ENCODE measurements at regions of chr4 and their contacts with region 1.

Region 1: GRCh38 chr4:53015681-53016080 is 153.6 kb downstream of the RASL11B start:
- DNase-seq: peak; percentile 81
- H3K4me3 ChIP-seq: no peak overlapping the region
- H3K27ac ChIP-seq: no peak overlapping the region
- H3K4me1 ChIP-seq: peaks cover 18% of the 10 kb centered on the region
- H3K27me3 ChIP-seq: no peaks in the 10 kb centered on the region
- CTCF ChIP-seq: peak; percentile 53 to 63
- POLR2A ChIP-seq: no peak

Region 2: GRCh38 chr4:53061091-53061850 is 45.6 kb after region 1 on chr4:
- CTCF ChIA-PET with region 1: no interaction called
- POLR2A ChIA-PET with region 1: no interaction called
- dilution Hi-C with region 1: no loop called
- intact Hi-C with region 1: no loop called
- DNase-seq: no peak
- H3K4me3 ChIP-seq: no peak overlapping the region
- H3K27ac ChIP-seq: no peak overlapping the region
- H3K4me1 ChIP-seq: no peaks in the 10 kb centered on the region
- H3K27me3 ChIP-seq: no peaks in the 10 kb centered on the region
- CTCF ChIP-seq: no peak
- POLR2A ChIP-seq: no peak

Region 3: DNA sequence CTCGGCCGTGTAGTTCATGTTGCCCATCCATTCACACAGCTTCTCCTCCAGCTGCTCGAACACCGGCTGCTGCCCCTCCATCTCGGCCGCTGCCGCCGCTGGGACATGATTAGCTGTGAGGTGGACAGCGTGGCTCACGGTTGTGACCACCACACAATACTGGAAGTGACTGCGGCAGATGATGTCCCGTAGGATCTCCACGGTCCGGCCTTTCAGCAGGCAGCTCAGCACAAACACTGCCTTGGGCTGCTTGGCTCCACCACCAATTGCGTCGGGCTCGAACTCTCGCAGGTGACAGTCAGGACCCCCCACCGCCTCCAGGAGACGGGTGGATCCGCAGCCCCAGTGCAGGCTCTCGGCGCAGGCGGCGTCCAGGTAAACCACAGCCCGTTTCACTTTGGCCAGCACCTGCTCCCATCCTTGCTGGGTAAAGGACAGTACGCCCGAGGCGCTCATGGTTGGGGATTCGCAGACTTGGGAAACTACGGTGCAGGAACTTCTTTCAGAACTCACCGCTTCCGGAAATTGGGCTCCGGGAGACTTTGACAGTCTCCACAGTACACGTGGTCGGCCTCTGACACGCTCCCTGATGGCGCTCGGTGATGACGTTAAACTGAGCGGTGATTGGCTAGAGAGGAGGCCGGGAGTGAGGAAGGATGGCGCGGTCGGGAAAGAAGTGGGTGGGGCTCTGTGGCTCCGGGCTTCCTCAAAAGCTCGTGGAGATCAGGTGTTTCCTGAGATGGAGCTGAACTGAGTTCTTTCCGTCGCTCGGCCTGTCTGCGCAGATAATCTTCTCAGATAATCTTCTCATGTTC is 350.0 kb after region 1 on chr4 and contains the start of gene SCFD2:
- CTCF ChIA-PET with region 1: interaction called, 5 read pairs
- POLR2A ChIA-PET with region 1: no interaction called
- dilution Hi-C with region 1: no loop called
- intact Hi-C with region 1: loop called (anchors 10 kb)
- DNase-seq: peak; percentile 96
- H3K4me3 ChIP-seq: peak within 1 kb of the TSS; percentile 49 to 97 (median 74)
- H3K27ac ChIP-seq: peak within 1 kb of the TSS; percentile 7
- H3K4me1 ChIP-seq: peaks cover 17% of the 10 kb centered on the region
- H3K27me3 ChIP-seq: peaks cover 14 to 19% of the 10 kb centered on the region in 2 experiments
- CTCF ChIP-seq: no peak
- POLR2A ChIP-seq: peak; percentile 67
- total RNA-seq, gene SCFD2: 17.6 and 22.8 TPM in 2 replicates

Region 4: DNA sequence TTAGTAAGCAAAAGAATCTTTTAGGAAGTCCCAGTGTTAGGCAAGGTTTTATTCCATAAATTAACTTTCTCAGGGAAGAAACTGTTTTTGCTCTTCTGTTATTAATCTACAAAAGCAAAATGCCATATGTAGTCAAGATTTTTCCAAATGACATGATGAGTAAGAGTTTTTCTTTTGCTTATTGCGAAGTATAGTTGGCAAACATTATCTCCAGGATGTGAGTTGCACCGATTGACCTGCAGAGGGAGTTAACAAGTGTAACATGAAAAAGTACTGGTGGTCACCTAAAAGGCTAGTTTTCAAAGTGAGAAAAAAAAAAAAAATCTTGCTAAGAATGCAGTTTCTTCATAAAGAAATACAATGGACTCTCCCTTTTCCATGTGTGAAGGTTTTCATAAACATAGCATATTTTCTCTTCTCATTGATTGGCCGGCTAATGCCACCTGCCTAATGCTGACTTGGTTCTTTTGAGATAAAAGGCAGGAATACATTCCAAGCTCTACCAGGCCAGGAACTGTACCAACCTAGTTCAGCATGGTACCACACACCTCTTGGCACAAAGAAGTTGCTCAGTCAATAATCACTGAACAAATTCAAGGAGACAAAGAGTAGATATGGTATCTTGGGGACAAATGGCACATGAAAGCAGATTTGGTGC is 475.4 kb after region 1 on chr4:
- CTCF ChIA-PET with region 1: interaction called, 6 read pairs
- POLR2A ChIA-PET with region 1: no interaction called
- dilution Hi-C with region 1: no loop called
- intact Hi-C with region 1: loop called (anchors 10 kb)
- DNase-seq: peak; percentile 85
- H3K4me3 ChIP-seq: no peak overlapping the region
- H3K27ac ChIP-seq: no peak overlapping the region
- H3K4me1 ChIP-seq: peaks cover 6% of the 10 kb centered on the region
- H3K27me3 ChIP-seq: no peaks in the 10 kb centered on the region
- CTCF ChIP-seq: peak; percentile 52 to 55
- POLR2A ChIP-seq: no peak

Region 5: GRCh38 chr4:53804719-53805118 is 789.0 kb after region 1 on chr4:
- CTCF ChIA-PET with region 1: interaction called, 3 read pairs
- POLR2A ChIA-PET with region 1: no interaction called
- dilution Hi-C with region 1: no loop called
- intact Hi-C with region 1: loop called (anchors 1 kb)
- DNase-seq: peak; percentile 11
- H3K4me3 ChIP-seq: no peak overlapping the region
- H3K27ac ChIP-seq: no peak overlapping the region
- H3K4me1 ChIP-seq: no peaks in the 10 kb centered on the region
- H3K27me3 ChIP-seq: peaks cover 4 to 17% of the 10 kb centered on the region in 2 experiments
- CTCF ChIP-seq: peak; percentile 30 to 33
- POLR2A ChIP-seq: no peak

Measured in endothelial cell of umbilical vein (primary cell).